A549 (cell line): ENCODE measurements at regions of chr12 and their contacts with region 1.

Region 1: DNA sequence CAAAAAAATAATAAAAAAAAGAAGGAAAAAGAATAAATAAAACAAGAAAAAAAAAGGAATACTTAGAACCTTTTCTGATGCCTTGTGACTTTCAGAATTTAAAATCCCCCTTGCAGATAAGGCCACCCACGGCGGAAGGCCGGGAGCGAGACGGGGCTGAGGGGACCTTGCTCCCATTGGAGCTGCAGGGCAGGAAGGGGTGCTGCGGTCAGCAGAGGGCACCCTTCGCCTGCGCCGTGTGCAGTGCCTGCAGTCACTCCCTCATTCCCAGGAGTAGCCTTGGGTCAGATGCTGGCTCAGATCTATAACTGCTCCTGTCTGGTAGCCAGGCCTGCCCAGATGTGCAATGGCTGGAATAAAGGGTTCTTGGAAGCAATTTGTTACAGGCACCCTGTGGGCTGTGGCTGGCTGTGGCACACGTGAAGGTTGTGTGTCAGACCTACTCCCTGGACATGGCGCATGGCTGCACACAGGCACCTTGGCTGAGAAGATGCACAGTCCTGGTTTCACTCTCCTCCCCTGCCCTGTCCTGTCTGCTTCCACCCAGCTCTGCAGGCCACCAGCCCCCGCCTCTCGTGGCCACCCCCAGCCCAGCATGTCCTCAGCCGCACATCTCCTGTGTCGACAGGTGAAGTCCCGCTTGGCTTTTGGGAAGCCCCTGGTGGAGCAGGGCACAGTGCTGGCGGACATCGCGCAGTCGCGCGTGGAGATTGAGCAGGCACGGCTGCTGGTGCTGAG is 13.4 kb upstream of the ALDH2 start:
- DNase-seq: peak; percentile 63 to 82
- ATAC-seq: peak; percentile 88 to 97
- H3K4me3 ChIP-seq: no peak overlapping the region
- H3K27ac ChIP-seq: no peak overlapping the region
- H3K4me1 ChIP-seq: no peaks in the 10 kb centered on the region
- CTCF ChIP-seq: peak; percentile 79
- EP300 ChIP-seq: no peak
- POLR2A ChIP-seq: no peak
- RAD21 ChIP-seq: peak; percentile 89 to 94

Region 2: GRCh38 chr12:111741235-111741812 is 12.0 kb before region 1 on chr12:
- CTCF ChIA-PET with region 1: interaction called, 26 read pairs
- POLR2A ChIA-PET with region 1: no interaction called
- DNase-seq: no peak
- ATAC-seq: no peak
- H3K4me3 ChIP-seq: no peak overlapping the region
- H3K27ac ChIP-seq: no peak overlapping the region
- H3K4me1 ChIP-seq: no peaks in the 10 kb centered on the region
- CTCF ChIP-seq: no peak
- EP300 ChIP-seq: no peak
- POLR2A ChIP-seq: no peak
- RAD21 ChIP-seq: no peak

Region 3: GRCh38 chr12:111767362-111768158 is 14.2 kb after region 1 on chr12:
- CTCF ChIA-PET with region 1: interaction called, 31 read pairs
- POLR2A ChIA-PET with region 1: interaction called, 5 read pairs
- DNase-seq: peak; percentile 53 to 67
- ATAC-seq: peak; percentile 74 to 75
- H3K4me3 ChIP-seq: peak overlapping the region; percentile 71
- H3K27ac ChIP-seq: peak overlapping the region; percentile 81 to 95
- H3K4me1 ChIP-seq: peaks cover 26% of the 10 kb centered on the region
- CTCF ChIP-seq: no peak
- EP300 ChIP-seq: no peak
- POLR2A ChIP-seq: no peak
- RAD21 ChIP-seq: no peak

Region 4: GRCh38 chr12:111788178-111788654 is 34.9 kb after region 1 on chr12:
- CTCF ChIA-PET with region 1: interaction called, 15 read pairs
- POLR2A ChIA-PET with region 1: no interaction called
- DNase-seq: peak in 1 of 2 experiments; percentile 51
- ATAC-seq: peak; percentile 68 to 78
- H3K4me3 ChIP-seq: no peak overlapping the region
- H3K27ac ChIP-seq: peak overlapping the region; percentile 60 to 70
- H3K4me1 ChIP-seq: peaks cover 34% of the 10 kb centered on the region
- CTCF ChIP-seq: peak; percentile 56
- EP300 ChIP-seq: no peak
- POLR2A ChIP-seq: no peak
- RAD21 ChIP-seq: peak; percentile 74 to 78

Region 5: GRCh38 chr12:112183141-112184021 is 430.1 kb after region 1 on chr12:
- CTCF ChIA-PET with region 1: no interaction called
- POLR2A ChIA-PET with region 1: no interaction called
- DNase-seq: no peak
- ATAC-seq: no peak
- H3K4me3 ChIP-seq: no peak overlapping the region
- H3K27ac ChIP-seq: no peak overlapping the region
- H3K4me1 ChIP-seq: no peaks in the 10 kb centered on the region
- CTCF ChIP-seq: no peak
- EP300 ChIP-seq: no peak
- POLR2A ChIP-seq: no peak
- RAD21 ChIP-seq: no peak